GM18951 (cell line): ENCODE measurements at regions of chr11 and their contacts with region 1.

Region 1: DNA sequence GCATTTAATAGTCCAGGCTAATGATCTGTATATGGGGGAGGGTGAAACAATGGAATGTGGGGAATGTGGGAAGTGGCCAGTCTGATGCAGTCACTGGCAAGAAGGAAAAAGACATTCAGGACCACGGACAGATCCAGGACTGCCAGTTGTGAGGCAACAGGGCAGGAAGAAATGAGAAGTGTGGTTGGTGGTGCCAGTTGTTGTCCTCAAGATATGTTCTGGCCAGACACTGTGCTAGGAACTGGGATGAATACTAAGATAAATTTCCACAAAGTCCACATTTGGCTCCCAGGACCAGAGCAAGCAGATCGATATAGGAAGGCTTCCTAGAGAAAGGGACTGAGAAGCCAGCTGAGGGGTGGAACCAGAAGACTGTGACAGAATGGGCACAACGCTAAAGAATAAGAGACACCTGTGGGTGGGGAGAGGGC is 6.8 kb upstream of the TPBGL start:
- POLR2A ChIP-seq: no peak

Region 2: GRCh38 chr11:75142714-75143419 is 90.9 kb before region 1 on chr11:
- in situ Hi-C with region 1: loop called (anchors 10 kb)
- POLR2A ChIP-seq: peak; percentile 36